Mammary epithelial cell (primary cell): ENCODE measurements at regions of chr1 and their contacts with region 1.

Region 1: GRCh38 chr1:86380257-86380861 is 15.8 kb downstream of the ODF2L start:
- DNase-seq: peak; percentile 51
- H3K4me3 ChIP-seq: no peak overlapping the region
- H3K27ac ChIP-seq: no peak overlapping the region
- H3K4me1 ChIP-seq: no peaks in the 10 kb centered on the region
- H3K27me3 ChIP-seq: no peaks in the 10 kb centered on the region
- CTCF ChIP-seq: peak; percentile 58 to 70

Region 2: GRCh38 chr1:86419277-86419903 is 39.0 kb after region 1 on chr1:
- CTCF ChIA-PET with region 1: no interaction called
- dilution Hi-C with region 1: no loop called
- in situ Hi-C with region 1: no loop called
- intact Hi-C with region 1: loop called (anchors 5 kb)
- DNase-seq: peak; percentile 52
- H3K4me3 ChIP-seq: no peak overlapping the region
- H3K27ac ChIP-seq: no peak overlapping the region
- H3K4me1 ChIP-seq: peaks cover 37% of the 10 kb centered on the region
- H3K27me3 ChIP-seq: no peaks in the 10 kb centered on the region
- CTCF ChIP-seq: peak; percentile 76 to 87